Caco-2 (cell line): ENCODE measurements at regions of chr2 and their contacts with region 1.

Region 1: DNA sequence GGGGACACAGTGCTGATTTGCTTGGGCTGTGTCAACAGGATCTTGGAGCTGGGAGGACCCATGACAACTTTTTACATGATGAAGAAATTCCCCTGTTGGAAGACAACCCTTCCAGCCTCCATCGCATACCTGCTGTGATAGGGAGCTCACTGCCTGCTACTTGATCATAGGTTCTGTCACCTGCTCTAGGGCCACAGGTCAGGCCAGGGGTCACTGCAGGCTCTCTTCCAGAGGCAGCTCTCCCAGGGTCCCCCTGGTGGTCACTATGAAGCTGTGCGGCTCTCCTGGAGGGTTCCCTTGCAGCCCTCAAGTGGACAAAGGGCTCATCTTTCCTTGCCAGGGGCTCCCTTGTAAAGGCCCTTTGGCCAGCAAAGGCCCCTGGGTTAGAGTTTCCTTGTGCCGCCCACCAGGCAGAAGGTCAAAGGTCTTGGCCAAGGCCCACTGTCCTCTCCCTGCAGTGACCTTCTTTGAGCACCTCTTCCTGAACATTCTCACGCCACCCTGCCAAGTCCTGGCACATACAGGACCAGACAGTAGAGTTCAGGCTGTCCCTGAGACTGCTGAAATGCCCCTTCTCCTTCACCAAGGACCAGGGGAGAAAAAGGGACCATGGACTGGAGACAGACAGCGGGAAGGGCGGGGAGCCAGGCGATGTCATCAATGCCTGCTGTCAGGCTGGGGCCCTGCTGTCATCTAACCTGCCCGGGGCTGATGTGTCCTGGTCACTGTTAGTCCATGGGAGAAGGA is 345.1 kb downstream of the DYSF start:
- DNase-seq: peak; percentile 71 to 80
- H3K4me3 ChIP-seq: no peak overlapping the region
- H3K4me3 Mint-ChIP-seq: no peak overlapping the region
- H3K27ac Mint-ChIP-seq: no peak overlapping the region
- H3K4me1 ChIP-seq: peaks cover 32% of the 10 kb centered on the region
- H3K4me1 Mint-ChIP-seq: peaks cover 28% of the 10 kb centered on the region
- H3K27me3 ChIP-seq: no peaks in the 10 kb centered on the region
- H3K27me3 Mint-ChIP-seq: no peaks in the 10 kb centered on the region
- CTCF ChIP-seq: peak; percentile 88 to 92

Region 2: DNA sequence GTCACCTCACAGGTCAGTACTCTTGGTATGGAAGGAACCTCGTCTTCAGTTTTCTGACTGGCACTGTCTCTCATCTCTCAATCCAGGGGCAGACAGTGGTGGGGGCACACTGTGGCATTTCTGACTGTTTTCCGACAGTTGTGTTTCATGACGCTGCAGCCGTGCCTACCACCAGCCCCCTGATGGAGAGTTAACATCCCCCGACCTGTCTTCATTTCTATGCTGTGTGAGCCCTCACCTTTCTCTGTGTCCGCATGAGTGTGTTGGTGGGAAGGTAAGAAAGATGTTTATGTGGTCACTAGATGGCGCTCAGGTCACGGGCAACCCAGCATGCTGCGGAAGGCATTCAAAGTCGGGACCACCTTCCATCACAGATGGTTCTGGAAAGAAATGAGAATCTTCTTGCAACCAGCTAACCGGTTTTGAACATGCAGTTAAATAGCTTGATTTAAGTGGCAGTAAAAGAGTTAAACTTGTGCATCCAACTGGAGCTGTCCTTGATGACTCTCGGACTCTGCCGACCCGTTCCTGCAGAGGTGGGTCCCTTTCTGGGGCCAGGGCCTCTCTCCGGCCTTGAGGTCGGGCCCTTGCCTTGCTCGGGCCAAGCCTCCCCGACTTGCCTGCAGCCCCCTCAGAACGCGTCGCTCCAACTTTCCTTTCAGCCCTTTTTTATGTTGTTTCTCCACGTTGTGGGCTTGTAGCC is 252.7 kb before region 1 on chr2:
- CTCF ChIA-PET with region 1: interaction called, 3 read pairs
- POLR2A ChIA-PET with region 1: no interaction called
- intact Hi-C with region 1: loop called (anchors 1 kb)
- DNase-seq: peak; percentile 64 to 72
- H3K4me3 ChIP-seq: no peak overlapping the region
- H3K4me3 Mint-ChIP-seq: no peak overlapping the region
- H3K27ac Mint-ChIP-seq: no peak overlapping the region
- H3K4me1 ChIP-seq: no peaks in the 10 kb centered on the region
- H3K4me1 Mint-ChIP-seq: peaks cover 7% of the 10 kb centered on the region
- H3K27me3 ChIP-seq: no peaks in the 10 kb centered on the region
- H3K27me3 Mint-ChIP-seq: peaks cover 4% of the 10 kb centered on the region
- CTCF ChIP-seq: peak; percentile 75 to 85

Region 3: GRCh38 chr2:71609958-71610357 is 188.5 kb before region 1 on chr2:
- CTCF ChIA-PET with region 1: interaction called, 6 read pairs
- POLR2A ChIA-PET with region 1: no interaction called
- intact Hi-C with region 1: loop called (anchors 1 kb)
- DNase-seq: no peak
- H3K4me3 ChIP-seq: no peak overlapping the region
- H3K4me3 Mint-ChIP-seq: no peak overlapping the region
- H3K27ac Mint-ChIP-seq: no peak overlapping the region
- H3K4me1 ChIP-seq: no peaks in the 10 kb centered on the region
- H3K4me1 Mint-ChIP-seq: no peaks in the 10 kb centered on the region
- H3K27me3 ChIP-seq: no peaks in the 10 kb centered on the region; the same call in 1 of the 2 replicates
- H3K27me3 Mint-ChIP-seq: peaks cover 8% of the 10 kb centered on the region
- CTCF ChIP-seq: peak in 1 of 2 experiments; percentile 53

Region 4: DNA sequence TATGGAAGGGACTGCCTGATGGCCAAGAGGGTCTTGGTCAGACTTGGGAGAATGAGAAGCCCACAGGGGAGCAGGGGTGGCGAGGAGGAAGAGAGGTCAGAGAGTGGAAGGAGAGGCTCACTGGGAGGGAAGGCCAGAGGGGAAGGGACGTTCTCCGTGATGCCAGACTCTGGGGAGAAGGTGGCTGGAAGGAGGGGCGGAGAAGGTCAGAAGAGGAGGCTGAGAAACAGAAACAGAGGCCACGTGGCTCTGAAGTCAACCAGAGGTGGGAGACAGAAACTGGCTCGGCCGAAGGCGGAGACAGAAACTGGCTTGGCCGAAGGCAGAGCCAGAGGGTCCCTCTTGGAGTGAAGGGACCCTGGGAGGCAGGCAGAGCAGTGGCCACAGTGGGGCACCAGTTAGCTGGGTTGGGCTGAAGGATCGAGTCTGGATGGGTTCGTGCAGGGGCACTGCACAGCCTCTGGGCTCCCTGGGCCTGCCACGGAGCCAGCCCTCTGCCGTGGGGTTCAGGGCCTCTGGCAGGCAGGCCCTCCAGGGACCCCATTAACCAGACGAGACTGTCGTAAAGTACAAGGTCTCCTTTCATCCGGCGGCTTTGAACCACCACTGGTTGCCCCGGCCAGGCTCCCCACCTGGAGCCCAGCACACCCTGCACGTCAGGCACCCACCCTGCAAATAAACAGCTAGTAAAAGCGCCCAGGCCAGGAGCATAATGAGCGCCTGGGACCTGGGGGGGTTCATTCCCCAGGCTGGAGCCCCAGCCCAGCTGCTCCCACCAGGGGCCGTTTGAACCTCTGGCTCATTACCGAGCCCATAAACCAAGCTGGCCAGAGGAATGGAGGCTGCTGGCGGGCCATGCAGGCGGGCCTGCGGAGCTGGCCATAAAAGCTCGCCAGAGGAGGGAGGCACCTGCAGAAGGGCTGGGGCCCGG is 126.3 kb before region 1 on chr2:
- CTCF ChIA-PET with region 1: no interaction called
- POLR2A ChIA-PET with region 1: no interaction called
- intact Hi-C with region 1: loop called (anchors 1 kb)
- DNase-seq: no peak
- H3K4me3 ChIP-seq: no peak overlapping the region
- H3K4me3 Mint-ChIP-seq: no peak overlapping the region
- H3K27ac Mint-ChIP-seq: no peak overlapping the region
- H3K4me1 ChIP-seq: no peaks in the 10 kb centered on the region
- H3K4me1 Mint-ChIP-seq: no peaks in the 10 kb centered on the region
- H3K27me3 ChIP-seq: no peaks in the 10 kb centered on the region
- H3K27me3 Mint-ChIP-seq: peaks cover 4% of the 10 kb centered on the region
- CTCF ChIP-seq: peak in 1 of 2 experiments; percentile 25

Region 5: GRCh38 chr2:71685078-71685848 is 113.2 kb before region 1 on chr2:
- CTCF ChIA-PET with region 1: no interaction called
- POLR2A ChIA-PET with region 1: no interaction called
- intact Hi-C with region 1: loop called (anchors 5 kb)
- DNase-seq: peak in 1 of 2 experiments; percentile 21
- H3K4me3 ChIP-seq: no peak overlapping the region
- H3K4me3 Mint-ChIP-seq: no peak overlapping the region
- H3K27ac Mint-ChIP-seq: no peak overlapping the region
- H3K4me1 ChIP-seq: no peaks in the 10 kb centered on the region
- H3K4me1 Mint-ChIP-seq: no peaks in the 10 kb centered on the region
- H3K27me3 ChIP-seq: no peaks in the 10 kb centered on the region
- H3K27me3 Mint-ChIP-seq: no peaks in the 10 kb centered on the region
- CTCF ChIP-seq: no peak

Region 6: GRCh38 chr2:71778936-71779773 is 19.3 kb before region 1 on chr2:
- CTCF ChIA-PET with region 1: interaction called, 11 read pairs
- POLR2A ChIA-PET with region 1: no interaction called
- intact Hi-C with region 1: loop called (anchors 1 kb)
- DNase-seq: no peak
- H3K4me3 ChIP-seq: no peak overlapping the region
- H3K4me3 Mint-ChIP-seq: no peak overlapping the region
- H3K27ac Mint-ChIP-seq: no peak overlapping the region
- H3K4me1 ChIP-seq: peaks cover 13% of the 10 kb centered on the region
- H3K4me1 Mint-ChIP-seq: peaks cover 14% of the 10 kb centered on the region
- H3K27me3 ChIP-seq: no peaks in the 10 kb centered on the region; the same call in 1 of the 2 replicates
- H3K27me3 Mint-ChIP-seq: no peaks in the 10 kb centered on the region
- CTCF ChIP-seq: peak in 1 of 2 experiments; percentile 8

Region 7: DNA sequence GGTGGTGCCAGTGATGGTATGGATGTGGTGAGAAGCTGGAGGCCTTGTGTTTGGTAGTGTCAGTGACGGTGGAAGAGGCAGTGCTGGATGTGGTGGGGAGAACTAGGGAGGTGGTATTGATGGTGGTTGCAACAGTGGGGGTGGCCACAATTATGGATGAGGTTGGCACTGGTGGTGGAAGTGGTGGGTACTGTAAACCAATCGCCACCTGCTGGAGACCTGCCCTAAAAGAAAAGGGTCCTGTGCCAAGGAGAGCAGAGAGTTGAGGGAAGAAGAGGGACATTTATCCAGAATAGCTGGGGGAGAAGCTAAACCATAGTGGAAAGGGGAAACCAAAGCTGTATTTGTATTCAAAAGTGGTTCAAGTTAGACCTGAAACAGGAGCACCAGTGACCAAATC is 75.2 kb after region 1 on chr2:
- CTCF ChIA-PET with region 1: no interaction called
- POLR2A ChIA-PET with region 1: no interaction called
- intact Hi-C with region 1: no loop called
- DNase-seq: no peak
- H3K4me3 ChIP-seq: no peak overlapping the region
- H3K4me3 Mint-ChIP-seq: no peak overlapping the region
- H3K27ac Mint-ChIP-seq: no peak overlapping the region
- H3K4me1 ChIP-seq: no peaks in the 10 kb centered on the region
- H3K4me1 Mint-ChIP-seq: no peaks in the 10 kb centered on the region
- H3K27me3 ChIP-seq: no peaks in the 10 kb centered on the region
- H3K27me3 Mint-ChIP-seq: peaks cover 26% of the 10 kb centered on the region
- CTCF ChIP-seq: no peak

Region 8: GRCh38 chr2:71995067-71995665 is 196.7 kb after region 1 on chr2:
- CTCF ChIA-PET with region 1: no interaction called
- POLR2A ChIA-PET with region 1: no interaction called
- intact Hi-C with region 1: loop called (anchors 10 kb)
- DNase-seq: peak in 1 of 2 experiments; percentile 23
- H3K4me3 ChIP-seq: no peak overlapping the region
- H3K4me3 Mint-ChIP-seq: no peak overlapping the region
- H3K27ac Mint-ChIP-seq: no peak overlapping the region
- H3K4me1 ChIP-seq: no peaks in the 10 kb centered on the region
- H3K4me1 Mint-ChIP-seq: no peaks in the 10 kb centered on the region
- H3K27me3 ChIP-seq: no peaks in the 10 kb centered on the region
- H3K27me3 Mint-ChIP-seq: no peaks in the 10 kb centered on the region
- CTCF ChIP-seq: peak; percentile 53 to 58